Activated CD4-positive, alpha-beta T cell treated with anti-CD3 and anti-CD28 coated beads for 36 hours (primary cell): ENCODE measurements at regions of chr4 and their contacts with region 1.

Region 1: GRCh38 chr4:4334798-4335520 is 44.9 kb downstream of the ZBTB49 start:
- DNase-seq: peak; percentile 87
- ATAC-seq: peak; percentile 97
- H3K4me3 Mint-ChIP-seq: no peak overlapping the region
- H3K27ac Mint-ChIP-seq: no peak overlapping the region
- H3K4me1 Mint-ChIP-seq: peaks cover 1% of the 10 kb centered on the region
- H3K27me3 Mint-ChIP-seq: no peaks in the 10 kb centered on the region

Region 2: DNA sequence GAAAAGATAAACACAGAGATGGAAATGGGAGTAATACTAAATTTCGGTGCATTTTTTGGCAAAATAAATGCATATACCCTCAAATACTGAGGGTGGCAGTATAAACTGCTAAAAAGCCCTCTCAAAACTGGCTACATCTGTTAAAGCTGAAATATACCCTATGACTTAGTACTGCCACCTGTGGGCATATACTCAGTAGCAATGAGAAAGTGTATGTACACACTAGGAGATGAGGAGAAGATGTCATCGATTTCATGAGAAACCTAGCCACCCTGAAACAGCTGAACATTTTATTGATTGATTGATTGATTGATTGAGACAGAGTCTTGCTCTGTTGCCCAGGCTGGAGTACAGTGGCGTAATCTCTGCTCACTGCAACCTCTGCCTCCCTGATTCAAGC is 74.7 kb before region 1 on chr4:
- CTCF ChIA-PET with region 1: interaction called, 4 read pairs
- POLR2A ChIA-PET with region 1: no interaction called
- intact Hi-C with region 1: loop called (anchors 2 kb)
- DNase-seq: no peak
- ATAC-seq: peak; percentile 97
- H3K4me3 Mint-ChIP-seq: no peak overlapping the region
- H3K27ac Mint-ChIP-seq: no peak overlapping the region
- H3K4me1 Mint-ChIP-seq: no peaks in the 10 kb centered on the region
- H3K27me3 Mint-ChIP-seq: no peaks in the 10 kb centered on the region

Region 3: GRCh38 chr4:4289941-4290850 is 44.8 kb before region 1 on chr4 and contains the starts of genes LYAR and ZBTB49:
- CTCF ChIA-PET with region 1: no interaction called
- POLR2A ChIA-PET with region 1: no interaction called
- intact Hi-C with region 1: loop called in 1 of 2 experiments (anchors 1 kb)
- DNase-seq: peak; percentile 98
- ATAC-seq: peak; percentile 95
- H3K4me3 Mint-ChIP-seq: peak within 1 kb of the TSS; percentile 93
- H3K27ac Mint-ChIP-seq: peak within 1 kb of the TSS; percentile 77
- H3K4me1 Mint-ChIP-seq: peaks cover 35% of the 10 kb centered on the region
- H3K27me3 Mint-ChIP-seq: no peaks in the 10 kb centered on the region
- total RNA-seq, gene LYAR: 65.6 to 74.3 TPM
- total RNA-seq, gene ZBTB49: 3.3 to 3.8 TPM